ENCODE measurements at regions of chr3 and their contacts with region 1.

Region 1: DNA sequence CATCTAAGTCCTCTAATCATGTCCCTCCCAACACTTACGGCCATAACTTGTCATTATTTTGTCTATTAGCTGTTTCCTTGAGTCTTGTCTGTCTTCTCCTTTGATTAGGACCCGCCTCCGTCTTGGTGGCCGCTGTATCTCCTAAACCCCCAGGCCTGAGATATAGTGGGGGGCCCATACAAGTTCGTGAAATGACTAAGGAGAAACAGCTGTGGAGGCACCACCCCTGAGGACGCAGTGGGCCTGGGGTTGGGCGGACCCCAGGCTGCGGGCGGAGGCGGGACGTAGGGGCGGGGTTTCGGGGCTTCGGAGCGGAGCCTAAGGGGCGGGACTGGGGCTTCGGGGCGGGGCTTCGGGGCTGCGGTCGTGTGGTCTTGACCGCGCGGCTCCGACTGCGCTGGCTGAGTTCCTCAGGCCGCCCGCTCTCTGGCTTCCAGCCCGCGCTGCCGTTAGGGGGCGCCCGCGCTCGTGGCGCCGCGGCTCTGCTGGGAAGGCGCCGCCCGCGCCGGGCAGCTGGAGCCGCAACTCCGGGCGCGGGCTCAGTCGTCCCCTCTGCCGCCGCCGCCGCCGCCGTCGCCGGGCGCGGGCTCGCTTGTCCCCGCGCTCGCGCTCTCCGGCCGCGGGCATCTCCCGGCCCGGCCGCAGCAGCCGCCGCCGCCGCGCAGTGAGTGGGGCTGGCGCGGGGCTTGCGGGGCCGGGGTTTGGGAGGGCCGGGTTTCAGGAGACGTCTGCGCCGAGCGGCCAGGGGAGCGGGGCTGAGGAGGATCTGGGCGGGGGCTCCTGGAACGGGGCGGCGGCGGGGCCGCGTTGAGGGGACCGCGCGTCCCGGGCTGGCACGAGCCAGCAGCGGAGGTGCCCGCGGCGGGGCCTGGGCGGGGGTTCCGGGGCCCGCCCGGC is at the start of gene KCTD6:
- DNase-seq: peak; percentile 79 to 91 (median 86)
- H3K4me3 ChIP-seq: peak within 1 kb of the TSS; percentile 31 to 84
- H3K4me3 Mint-ChIP-seq: peak within 1 kb of the TSS; percentile 92 to 97 (median 96)
- H3K27ac ChIP-seq: peak within 1 kb of the TSS; percentile 54
- H3K27ac Mint-ChIP-seq: peak within 1 kb of the TSS; percentile 87 to 98 (median 94)
- H3K4me1 ChIP-seq: peaks cover 52% of the 10 kb centered on the region
- H3K4me1 Mint-ChIP-seq: peaks cover 39 to 78% (median 60%) of the 10 kb centered on the region in 4 donors
- H3K27me3 ChIP-seq: no peaks in the 10 kb centered on the region
- H3K27me3 Mint-ChIP-seq: no peaks in the 10 kb centered on the region
- total RNA-seq, gene KCTD6: 8.9 to 11.6 TPM

Region 2: DNA sequence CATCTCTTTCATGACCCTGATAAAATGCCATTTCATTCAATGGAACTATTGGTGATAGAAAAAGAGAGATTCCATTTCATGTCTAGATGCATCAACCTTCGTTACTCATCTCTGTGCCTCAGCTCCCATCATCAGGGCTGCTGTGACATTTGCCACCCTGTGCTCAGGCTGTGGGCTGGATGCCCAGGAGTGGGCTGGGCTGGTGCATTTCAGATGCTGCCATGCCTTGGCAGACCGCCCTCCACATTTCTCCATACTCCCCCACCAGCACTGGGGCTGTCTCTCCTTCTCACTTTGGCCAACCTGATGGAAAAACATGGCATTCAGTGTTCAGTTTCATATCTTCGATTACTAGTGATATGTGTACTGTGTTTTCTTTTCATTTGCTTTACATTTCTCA is 340.1 kb before region 1 on chr3:
- CTCF ChIA-PET with region 1: no interaction called
- POLR2A ChIA-PET with region 1: no interaction called
- intact Hi-C with region 1: no loop called
- DNase-seq: no peak
- H3K4me3 ChIP-seq: no peak overlapping the region
- H3K4me3 Mint-ChIP-seq: no peak overlapping the region
- H3K27ac ChIP-seq: no peak overlapping the region
- H3K27ac Mint-ChIP-seq: peak overlapping the region in 2 of 7 donors; percentile 0 to 47
- H3K4me1 ChIP-seq: no peaks in the 10 kb centered on the region
- H3K4me1 Mint-ChIP-seq: no peaks in the 10 kb centered on the region
- H3K27me3 ChIP-seq: no peaks in the 10 kb centered on the region
- H3K27me3 Mint-ChIP-seq: no peaks in the 10 kb centered on the region

Region 3: DNA sequence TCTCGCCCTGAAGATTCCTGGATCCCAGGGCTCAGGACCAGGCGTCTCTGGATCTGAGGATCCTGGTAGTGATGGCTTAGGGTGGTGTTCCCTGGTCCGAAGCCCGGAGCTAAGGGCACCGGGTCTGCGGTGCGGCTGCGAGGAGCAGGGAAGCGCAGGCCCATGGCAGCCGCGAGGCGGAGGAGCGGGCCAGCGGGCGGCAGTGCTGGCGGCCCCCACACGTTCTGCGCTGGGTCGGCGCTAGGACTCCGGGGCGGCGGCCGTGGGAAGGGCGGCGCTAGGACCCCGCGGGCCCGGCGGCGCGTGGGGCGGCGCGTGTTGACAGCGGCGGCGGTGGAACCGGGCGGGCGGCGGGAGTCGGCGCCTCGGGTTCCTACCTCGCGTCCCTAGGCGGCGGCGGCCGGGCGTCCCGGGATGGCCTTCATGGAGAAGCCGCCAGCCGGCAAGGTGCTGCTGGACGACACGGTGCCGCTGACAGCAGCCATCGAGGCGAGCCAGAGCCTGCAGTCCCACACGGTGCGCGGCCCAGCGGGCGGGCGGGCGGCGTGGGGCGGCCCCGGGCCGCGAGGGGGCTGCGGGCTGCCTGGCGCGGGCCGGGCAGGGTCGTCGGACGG is 159.1 kb before region 1 on chr3 and contains the start of gene PXK:
- CTCF ChIA-PET with region 1: interaction called, 50 read pairs
- POLR2A ChIA-PET with region 1: interaction called, 18 read pairs
- intact Hi-C with region 1: loop called (anchors 1 kb)
- DNase-seq: peak; percentile 75 to 84 (median 81)
- H3K4me3 ChIP-seq: peak within 1 kb of the TSS; percentile 46 to 57
- H3K4me3 Mint-ChIP-seq: peak within 1 kb of the TSS; percentile 96 to 100 (median 100)
- H3K27ac ChIP-seq: peak within 1 kb of the TSS; percentile 56
- H3K27ac Mint-ChIP-seq: peak within 1 kb of the TSS; percentile 85 to 98 (median 95)
- H3K4me1 ChIP-seq: peaks cover 30% of the 10 kb centered on the region
- H3K4me1 Mint-ChIP-seq: peaks cover 23 to 48% (median 33%) of the 10 kb centered on the region in 4 donors
- H3K27me3 ChIP-seq: no peaks in the 10 kb centered on the region
- H3K27me3 Mint-ChIP-seq: no peaks in the 10 kb centered on the region
- total RNA-seq, gene PXK: 20.0 to 20.2 TPM

Region 4: DNA sequence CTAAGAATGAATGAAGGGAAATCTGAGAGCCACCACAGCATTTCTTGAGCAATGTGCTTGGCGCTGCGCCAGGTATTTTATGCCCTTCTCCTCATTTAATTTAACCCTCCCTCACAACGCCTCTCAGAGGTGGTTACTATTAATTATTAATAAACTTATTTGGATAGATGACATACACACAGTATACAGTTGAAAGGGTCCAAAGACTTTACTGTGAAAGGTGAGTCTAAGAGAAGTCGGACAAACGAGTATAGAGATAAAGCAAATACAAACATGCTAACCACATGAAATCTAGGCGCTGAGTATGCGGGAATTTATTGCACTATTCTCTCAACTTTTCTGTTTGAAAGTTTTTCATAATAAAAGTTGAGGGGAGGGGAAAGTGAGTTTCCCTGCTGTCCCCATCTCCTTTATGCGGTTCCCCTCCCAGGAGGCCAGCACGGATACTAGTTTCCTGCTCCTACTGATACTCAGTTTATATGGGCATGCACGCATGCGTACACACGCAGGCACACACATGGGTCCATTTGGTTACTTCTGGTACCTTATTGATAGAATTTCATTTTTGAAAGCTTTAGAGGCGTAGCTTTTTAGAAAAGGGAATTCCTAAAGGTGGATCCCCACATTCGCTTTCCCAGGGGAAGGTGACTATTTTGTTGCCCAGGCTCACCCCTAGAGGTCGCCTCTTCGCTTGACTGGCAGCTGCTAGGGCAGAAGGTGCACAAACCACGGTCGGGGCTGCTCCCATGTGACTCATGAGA is 28.4 kb before region 1 on chr3:
- CTCF ChIA-PET with region 1: interaction called, 44 read pairs
- POLR2A ChIA-PET with region 1: interaction called, 5 read pairs
- intact Hi-C with region 1: loop called (anchors 1 kb)
- DNase-seq: peak; percentile 41 to 67 (median 54)
- H3K4me3 ChIP-seq: no peak overlapping the region
- H3K4me3 Mint-ChIP-seq: peak overlapping the region in 6 of 8 donors; percentile 8 to 56 (median 25)
- H3K27ac ChIP-seq: no peak overlapping the region
- H3K27ac Mint-ChIP-seq: peak overlapping the region in 2 of 7 donors; percentile 41 to 79
- H3K4me1 ChIP-seq: peaks cover 7% of the 10 kb centered on the region
- H3K4me1 Mint-ChIP-seq: peaks cover 2 to 7% (median 7%) of the 10 kb centered on the region in 4 donors
- H3K27me3 ChIP-seq: no peaks in the 10 kb centered on the region
- H3K27me3 Mint-ChIP-seq: peaks cover 0 to 3% of the 10 kb centered on the region in 2 donors

Region 5: DNA sequence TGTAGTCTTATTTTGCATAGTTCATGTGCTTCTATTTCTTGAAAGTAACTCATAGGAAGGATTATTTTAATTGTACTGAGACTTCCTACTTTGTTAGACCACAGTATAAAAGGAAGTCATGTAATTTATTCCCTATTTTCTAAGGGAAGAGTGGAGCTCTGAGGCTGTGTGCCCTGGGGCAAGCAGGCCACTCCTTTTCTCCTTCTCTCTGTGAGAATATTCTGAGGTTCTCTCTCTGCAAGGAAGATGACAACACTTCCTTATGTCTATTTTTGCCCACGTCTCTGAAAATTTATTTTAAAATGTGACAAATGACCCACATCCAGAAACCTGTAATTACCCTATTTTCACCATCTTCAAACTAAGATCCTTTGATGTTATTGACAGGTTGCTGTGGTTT is 11.1 kb after region 1 on chr3:
- CTCF ChIA-PET with region 1: interaction called, 10 read pairs
- POLR2A ChIA-PET with region 1: no interaction called
- intact Hi-C with region 1: no loop called
- DNase-seq: no peak
- H3K4me3 ChIP-seq: no peak overlapping the region
- H3K4me3 Mint-ChIP-seq: no peak overlapping the region
- H3K27ac ChIP-seq: no peak overlapping the region
- H3K27ac Mint-ChIP-seq: no peak overlapping the region
- H3K4me1 ChIP-seq: no peaks in the 10 kb centered on the region
- H3K4me1 Mint-ChIP-seq: peaks cover 4 to 20% (median 10%) of the 10 kb centered on the region in 4 donors
- H3K27me3 ChIP-seq: no peaks in the 10 kb centered on the region
- H3K27me3 Mint-ChIP-seq: no peaks in the 10 kb centered on the region

Measured in CD4-positive, alpha-beta memory T cell (primary cell).